Activated CD4-positive, alpha-beta memory T cell treated with anti-CD3 and anti-CD28 coated beads, Interleukin-2, amount 10 ng/mL, durations not matched to agents 7 days and 5 days (primary cell): ENCODE measurements at regions of chr1 and their contacts with region 1.

Region 1: DNA sequence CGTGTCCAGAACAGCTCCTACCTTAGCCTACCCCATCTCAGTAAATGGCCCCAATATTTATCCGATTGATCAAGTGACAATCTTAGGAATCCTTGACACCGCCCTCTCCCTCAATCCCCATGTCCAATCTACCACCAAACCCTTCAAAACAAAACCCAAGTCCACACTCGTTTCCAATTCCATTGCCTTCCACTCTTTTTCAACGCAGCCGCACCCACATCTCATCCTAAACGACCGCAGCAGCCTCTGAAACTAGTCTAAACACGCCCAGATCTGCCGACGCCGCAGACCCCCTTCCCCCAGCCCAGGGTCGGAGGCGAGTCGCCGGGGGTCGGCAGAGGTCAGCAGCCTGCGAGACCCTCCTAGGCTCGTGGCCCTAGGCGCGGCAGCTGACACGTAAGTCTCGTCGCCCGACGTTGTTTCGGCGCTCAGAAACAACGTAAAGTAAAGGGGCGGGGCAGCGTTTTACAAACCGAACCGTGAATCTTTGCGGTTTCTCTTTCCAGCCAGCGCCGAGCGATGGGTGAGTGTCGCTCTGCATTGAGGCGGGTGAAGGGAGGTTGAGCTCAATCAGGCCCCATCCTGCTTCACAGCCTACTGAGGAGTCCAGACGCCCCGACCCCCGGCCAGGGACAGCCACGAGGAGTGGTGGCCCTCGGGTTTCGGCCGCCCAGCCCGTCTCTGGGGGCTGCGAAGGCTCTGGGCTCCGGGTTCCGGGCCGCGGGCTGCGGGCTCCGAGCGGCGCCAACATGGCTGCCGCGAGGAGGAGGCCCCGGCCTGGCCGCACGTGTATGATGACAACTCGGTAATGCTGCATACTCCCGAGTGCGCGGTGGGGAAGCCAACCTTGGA is at the start of gene RPS8:
- DNase-seq: peak; percentile 93
- H3K4me3 Mint-ChIP-seq: peak within 1 kb of the TSS; percentile 90
- H3K27ac Mint-ChIP-seq: peak within 1 kb of the TSS; percentile 90
- H3K4me1 Mint-ChIP-seq: peaks cover 35% of the 10 kb centered on the region
- H3K27me3 Mint-ChIP-seq: no peaks in the 10 kb centered on the region
- total RNA-seq, gene RPS8: 1,610 to 1,658 TPM

Region 2: GRCh38 chr1:44674113-44675000 is 100.9 kb before region 1 on chr1 and contains the starts of genes ARMH1 and TMEM53:
- CTCF ChIA-PET with region 1: no interaction called
- POLR2A ChIA-PET with region 1: no interaction called
- DNase-seq: peak; percentile 99
- H3K4me3 Mint-ChIP-seq: peak within 1 kb of the TSS; percentile 83
- H3K27ac Mint-ChIP-seq: peak within 1 kb of the TSS; percentile 79
- H3K4me1 Mint-ChIP-seq: peaks cover 32% of the 10 kb centered on the region
- H3K27me3 Mint-ChIP-seq: no peaks in the 10 kb centered on the region
- total RNA-seq, gene ARMH1: 20.8 to 21.2 TPM
- total RNA-seq, gene TMEM53: 4.3 to 5.6 TPM

Region 3: DNA sequence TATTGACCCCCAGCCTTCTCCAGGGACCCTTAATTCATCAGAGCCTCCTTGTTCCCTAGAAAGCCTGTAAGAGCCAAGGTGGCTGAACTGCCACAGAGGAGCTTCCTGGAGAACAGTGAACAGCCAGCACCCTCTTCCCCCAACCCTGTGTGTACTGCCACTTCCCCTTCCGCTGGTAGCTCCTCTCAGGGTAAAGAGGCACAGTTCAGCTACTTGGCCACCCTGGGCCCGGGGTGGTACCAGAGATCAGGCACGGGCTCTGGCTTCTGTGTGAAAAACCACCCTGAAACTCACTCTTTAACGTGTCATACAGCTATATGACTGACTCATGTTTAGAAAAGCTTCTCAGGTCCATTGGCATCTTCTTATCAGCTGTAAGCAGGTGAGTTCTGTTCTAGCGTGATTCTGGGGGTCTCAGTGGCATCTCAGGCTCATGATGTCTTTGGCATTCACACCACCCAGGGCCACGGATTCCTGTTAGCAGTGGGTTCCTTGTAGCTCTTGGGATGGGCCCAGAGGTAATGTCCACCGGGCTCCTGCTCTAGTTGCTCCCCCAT is 78.4 kb before region 1 on chr1:
- CTCF ChIA-PET with region 1: no interaction called
- POLR2A ChIA-PET with region 1: no interaction called
- DNase-seq: peak; percentile 58
- H3K4me3 Mint-ChIP-seq: no peak overlapping the region
- H3K27ac Mint-ChIP-seq: peak overlapping the region; percentile 83
- H3K4me1 Mint-ChIP-seq: peaks cover 21% of the 10 kb centered on the region
- H3K27me3 Mint-ChIP-seq: no peaks in the 10 kb centered on the region

Region 4: DNA sequence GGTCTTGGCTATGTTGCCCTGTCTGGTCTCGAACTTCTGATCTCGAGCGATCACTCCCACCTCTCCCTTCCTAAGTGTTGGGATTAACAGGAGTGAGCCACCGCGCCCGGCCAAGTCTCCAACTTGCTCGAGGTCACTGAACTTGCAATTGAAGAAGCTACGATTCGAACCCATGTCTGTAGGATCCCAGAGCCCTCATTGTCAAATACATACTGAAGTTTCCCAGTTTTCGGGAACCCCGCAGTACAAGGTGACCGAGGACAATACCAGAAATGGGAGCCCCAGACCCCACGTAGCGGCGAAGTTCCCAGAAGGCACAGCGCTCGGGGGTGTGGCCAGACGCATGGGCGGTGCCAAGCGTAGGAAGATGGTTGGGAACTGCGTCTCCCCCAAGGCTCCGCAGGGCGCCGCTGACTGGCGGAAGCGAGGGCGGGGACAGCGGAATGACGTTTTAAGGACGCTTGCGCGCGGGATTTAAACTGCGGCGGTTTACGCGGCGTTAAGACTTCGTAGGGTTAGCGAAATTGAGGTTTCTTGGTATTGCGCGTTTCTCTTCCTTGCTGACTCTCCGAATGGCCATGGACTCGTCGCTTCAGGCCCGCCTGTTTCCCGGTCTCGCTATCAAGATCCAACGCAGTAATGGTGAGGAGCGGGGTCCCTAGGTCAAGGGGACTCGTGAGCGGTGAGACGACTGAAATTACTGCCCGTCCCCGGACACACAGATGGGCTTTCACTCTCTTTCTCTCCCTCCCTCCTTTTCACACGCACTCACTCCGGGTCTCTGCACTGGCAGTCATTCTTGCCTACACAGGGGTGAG is 35.7 kb before region 1 on chr1 and contains the start of gene KIF2C:
- CTCF ChIA-PET with region 1: interaction called, 3 read pairs
- POLR2A ChIA-PET with region 1: interaction called, 35 read pairs
- DNase-seq: peak; percentile 98
- H3K4me3 Mint-ChIP-seq: peak within 1 kb of the TSS; percentile 91
- H3K27ac Mint-ChIP-seq: peak within 1 kb of the TSS; percentile 84
- H3K4me1 Mint-ChIP-seq: peaks cover 45% of the 10 kb centered on the region
- H3K27me3 Mint-ChIP-seq: peaks cover 3% of the 10 kb centered on the region
- total RNA-seq, gene KIF2C: 105 to 106 TPM

Region 5: DNA sequence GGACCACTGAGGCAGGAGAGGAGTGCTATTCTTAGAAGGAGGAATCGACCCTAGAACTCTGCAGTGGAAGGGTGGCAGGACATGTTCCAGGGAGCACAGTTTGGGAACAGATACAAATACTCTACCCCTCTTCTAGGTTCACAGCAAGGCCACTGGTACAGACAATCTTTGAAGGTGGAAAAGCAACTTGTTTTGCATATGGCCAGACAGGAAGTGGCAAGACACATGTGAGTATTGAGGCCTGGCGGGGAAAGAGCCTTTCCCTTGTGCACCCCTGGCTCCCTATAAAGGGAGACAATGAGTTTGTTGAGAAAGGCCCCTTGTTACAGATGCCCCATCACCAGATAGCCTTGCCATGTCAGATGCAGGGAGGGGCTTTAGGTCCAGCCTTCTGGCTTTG is 17.9 kb before region 1 on chr1:
- CTCF ChIA-PET with region 1: interaction called, 5 read pairs
- POLR2A ChIA-PET with region 1: interaction called, 22 read pairs
- DNase-seq: no peak
- H3K4me3 Mint-ChIP-seq: no peak overlapping the region
- H3K27ac Mint-ChIP-seq: peak overlapping the region; percentile 31
- H3K4me1 Mint-ChIP-seq: peaks cover 8% of the 10 kb centered on the region
- H3K27me3 Mint-ChIP-seq: no peaks in the 10 kb centered on the region

Region 6: GRCh38 chr1:44792783-44793714 is 17.7 kb after region 1 on chr1:
- CTCF ChIA-PET with region 1: interaction called, 8 read pairs
- POLR2A ChIA-PET with region 1: interaction called, 109 read pairs
- DNase-seq: no peak
- H3K4me3 Mint-ChIP-seq: no peak overlapping the region
- H3K27ac Mint-ChIP-seq: no peak overlapping the region
- H3K4me1 Mint-ChIP-seq: peaks cover 2% of the 10 kb centered on the region
- H3K27me3 Mint-ChIP-seq: no peaks in the 10 kb centered on the region

Region 7: DNA sequence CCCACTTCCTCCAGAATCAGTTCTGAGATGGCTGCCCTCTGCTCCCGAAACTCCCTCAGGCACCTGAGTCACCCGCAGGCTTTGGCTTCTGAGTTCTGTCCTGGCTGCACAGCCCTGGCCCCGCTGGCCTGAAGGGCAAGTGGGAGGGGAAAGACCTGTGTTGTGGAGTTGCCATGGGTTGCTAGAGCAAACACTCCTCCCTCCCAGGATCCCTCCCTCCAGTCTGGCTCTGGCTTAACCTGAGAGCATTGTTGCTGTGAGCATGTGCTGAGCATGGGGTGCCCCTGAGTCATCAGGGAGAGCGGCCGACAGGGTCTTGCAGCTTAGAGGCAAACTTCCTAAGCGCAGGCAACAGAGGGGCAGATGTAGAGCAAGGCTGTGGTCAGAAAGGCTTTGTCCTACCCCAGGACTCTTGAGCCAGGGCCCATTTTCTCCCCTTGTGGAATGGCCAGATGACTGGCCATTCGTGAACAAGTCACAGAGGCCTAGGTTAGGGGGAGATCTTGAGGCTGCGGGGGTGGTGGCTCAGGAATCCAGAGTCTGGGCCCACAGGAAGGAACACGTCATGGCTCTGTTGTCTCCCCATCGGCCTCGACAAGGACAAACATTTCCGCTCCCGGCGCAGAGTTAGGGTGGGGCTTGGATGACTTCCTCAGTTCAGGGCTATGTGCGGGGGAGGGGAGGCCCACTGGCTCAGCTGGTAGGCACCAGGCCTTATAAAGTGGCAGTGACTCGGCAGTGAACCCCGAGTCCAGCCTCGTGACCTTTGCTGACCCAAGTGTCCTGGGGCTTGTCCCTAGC is 32.2 kb after region 1 on chr1 and contains the start of gene DYNLT4:
- CTCF ChIA-PET with region 1: interaction called, 7 read pairs
- POLR2A ChIA-PET with region 1: interaction called, 87 read pairs
- DNase-seq: peak; percentile 93
- H3K4me3 Mint-ChIP-seq: peak within 1 kb of the TSS; percentile 73
- H3K27ac Mint-ChIP-seq: peak within 1 kb of the TSS; percentile 98
- H3K4me1 Mint-ChIP-seq: peaks cover 92% of the 10 kb centered on the region
- H3K27me3 Mint-ChIP-seq: no peaks in the 10 kb centered on the region
- total RNA-seq, gene DYNLT4: 1.9 to 2.2 TPM

Region 8: GRCh38 chr1:44819608-44820327 is 44.5 kb after region 1 on chr1:
- CTCF ChIA-PET with region 1: interaction called, 4 read pairs
- POLR2A ChIA-PET with region 1: interaction called, 195 read pairs
- DNase-seq: peak; percentile 87
- H3K4me3 Mint-ChIP-seq: peak overlapping the region; percentile 85
- H3K27ac Mint-ChIP-seq: peak overlapping the region; percentile 98
- H3K4me1 Mint-ChIP-seq: peaks cover 45% of the 10 kb centered on the region
- H3K27me3 Mint-ChIP-seq: no peaks in the 10 kb centered on the region

Region 9: GRCh38 chr1:45303582-45304310 is 528.4 kb after region 1 on chr1:
- CTCF ChIA-PET with region 1: no interaction called
- POLR2A ChIA-PET with region 1: interaction called, 18 read pairs
- DNase-seq: peak; percentile 99
- H3K4me3 Mint-ChIP-seq: peak overlapping the region; percentile 83
- H3K27ac Mint-ChIP-seq: peak overlapping the region; percentile 86
- H3K4me1 Mint-ChIP-seq: peaks cover 44% of the 10 kb centered on the region
- H3K27me3 Mint-ChIP-seq: no peaks in the 10 kb centered on the region